ENCODE measurements at regions of chr4 and their contacts with region 1.

Region 1: GRCh38 chr4:8468746-8469535 is 28.4 kb downstream of the TRMT44 start:
- DNase-seq: peak; percentile 28 to 53
- ATAC-seq: peak; percentile 83 to 90
- H3K4me3 ChIP-seq: no peak overlapping the region
- H3K27ac ChIP-seq: no peak overlapping the region
- H3K4me1 ChIP-seq: no peaks in the 10 kb centered on the region
- CTCF ChIP-seq: peak; percentile 75
- EP300 ChIP-seq: no peak
- POLR2A ChIP-seq: no peak
- RAD21 ChIP-seq: peak; percentile 78 to 81

Region 2: DNA sequence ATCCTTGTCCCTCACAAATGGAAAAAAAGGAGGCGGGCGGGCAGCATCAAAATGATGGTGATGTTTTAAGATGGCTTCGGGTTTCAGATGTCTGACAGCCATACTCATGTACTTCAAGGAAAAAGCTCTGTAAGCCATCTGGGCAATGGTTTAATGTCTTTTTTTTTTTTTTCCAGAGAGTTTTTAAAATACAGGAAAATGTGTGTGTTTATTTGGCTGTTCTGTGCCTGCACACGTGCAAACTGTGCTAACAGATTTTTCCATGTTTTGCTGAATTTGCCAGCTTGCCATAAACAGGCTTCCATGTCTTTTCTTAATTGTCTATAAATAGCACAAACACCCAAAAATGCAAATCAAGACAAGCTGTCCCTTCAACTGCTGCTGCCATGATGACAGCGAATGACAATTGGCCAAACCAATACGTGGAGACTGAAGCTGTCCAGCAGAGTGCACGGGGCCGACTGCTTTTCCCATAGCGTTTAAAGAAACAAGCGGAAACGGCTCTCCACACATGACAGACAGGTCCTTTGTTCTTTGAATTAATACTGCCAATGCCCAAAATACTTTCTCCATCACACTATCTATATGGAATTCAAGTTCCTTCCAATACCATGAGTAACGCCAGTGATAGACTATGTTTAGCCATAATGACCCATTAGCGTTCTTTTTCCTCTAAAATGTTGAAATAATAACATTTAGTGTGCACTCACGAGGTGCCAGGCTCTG is 565.0 kb before region 1 on chr4:
- CTCF ChIA-PET with region 1: no interaction called
- POLR2A ChIA-PET with region 1: no interaction called
- DNase-seq: no peak
- ATAC-seq: no peak
- H3K4me3 ChIP-seq: no peak overlapping the region
- H3K27ac ChIP-seq: peak overlapping the region in 1 of 2 experiments; percentile 82; a peak in 3 of 6 replicates
- H3K4me1 ChIP-seq: peaks cover 80% of the 10 kb centered on the region
- CTCF ChIP-seq: no peak
- EP300 ChIP-seq: no peak
- POLR2A ChIP-seq: no peak
- RAD21 ChIP-seq: no peak

Region 3: DNA sequence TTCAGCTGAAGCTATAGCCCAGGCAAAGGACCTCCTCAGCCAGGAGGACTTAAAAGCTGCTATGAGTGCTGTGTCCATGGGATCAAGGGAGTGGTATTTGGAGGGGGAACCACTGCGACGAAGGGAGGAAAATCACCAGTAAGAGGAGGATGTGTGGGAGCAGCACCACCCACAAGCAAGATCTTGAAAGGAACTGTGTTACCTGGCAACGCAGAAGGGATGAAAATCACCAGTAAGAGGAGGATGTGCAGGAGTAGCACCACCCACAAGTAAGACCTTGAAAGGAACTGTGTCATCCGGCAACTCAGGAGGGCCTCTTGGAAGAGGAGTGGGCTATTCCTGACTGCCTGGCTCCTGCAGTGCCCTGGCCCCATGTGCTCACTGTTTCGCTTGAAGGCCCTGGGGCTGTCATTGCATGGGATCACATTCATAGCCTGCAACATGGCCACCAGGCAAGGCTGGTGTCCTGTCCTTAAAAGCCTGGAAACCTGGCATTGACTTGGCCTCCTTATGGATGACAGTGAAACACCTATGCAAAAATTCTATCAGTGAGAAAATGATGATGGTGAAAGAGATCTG is 19.9 kb after region 1 on chr4:
- CTCF ChIA-PET with region 1: interaction called, 11 read pairs
- POLR2A ChIA-PET with region 1: no interaction called
- DNase-seq: no peak
- ATAC-seq: no peak
- H3K4me3 ChIP-seq: no peak overlapping the region
- H3K27ac ChIP-seq: no peak overlapping the region
- H3K4me1 ChIP-seq: no peaks in the 10 kb centered on the region
- CTCF ChIP-seq: no peak
- EP300 ChIP-seq: no peak
- POLR2A ChIP-seq: no peak
- RAD21 ChIP-seq: no peak

Region 4: DNA sequence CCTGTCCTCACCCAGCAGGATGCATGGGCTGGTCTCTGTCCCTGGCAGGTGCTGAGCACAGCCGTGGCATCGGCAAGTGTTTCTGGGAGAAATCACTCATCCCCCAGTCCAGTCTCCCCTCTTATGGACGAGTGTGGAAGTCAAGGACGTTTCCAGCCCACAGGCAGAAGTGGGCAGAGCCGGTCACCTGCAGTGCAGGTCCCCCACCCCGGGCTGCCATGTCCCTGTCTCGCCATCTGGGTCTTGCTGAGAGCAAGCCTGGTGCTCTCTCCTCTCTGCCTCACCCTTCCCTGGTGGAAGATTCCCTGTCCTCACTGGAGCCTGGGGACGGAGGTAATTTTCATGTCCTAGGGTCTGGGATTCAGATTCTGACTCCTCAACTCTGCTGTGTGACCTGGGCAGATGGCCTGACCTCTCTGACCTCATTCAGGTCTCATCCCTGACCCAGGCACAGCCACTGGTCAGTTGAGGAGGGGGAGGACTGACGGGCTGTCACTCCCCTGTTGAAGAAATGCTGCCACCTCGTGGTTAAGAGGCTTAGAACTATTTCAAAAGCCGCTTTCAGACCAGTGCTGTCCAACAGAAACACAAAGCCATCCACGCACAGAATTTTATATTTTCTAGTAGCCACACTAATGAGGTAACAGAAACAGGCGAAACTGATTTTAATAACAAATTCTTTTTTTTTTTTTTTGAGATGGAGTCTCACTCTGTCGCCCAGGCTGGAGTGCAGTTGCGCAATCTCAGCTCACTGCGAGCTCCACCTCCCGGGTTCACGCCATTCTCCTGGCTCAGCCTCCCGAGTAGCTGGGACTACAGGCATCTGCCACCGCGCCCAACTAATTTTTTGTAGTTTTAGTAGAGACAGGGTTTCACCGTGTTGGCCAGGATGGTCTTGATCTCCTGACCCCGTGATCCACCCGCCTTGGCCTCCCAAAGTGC is 125.4 kb after region 1 on chr4:
- CTCF ChIA-PET with region 1: interaction called, 34 read pairs
- POLR2A ChIA-PET with region 1: no interaction called
- DNase-seq: peak; percentile 70 to 77
- ATAC-seq: peak; percentile 51 to 83; a peak in 5 of 6 replicates
- H3K4me3 ChIP-seq: no peak overlapping the region
- H3K27ac ChIP-seq: no peak overlapping the region
- H3K4me1 ChIP-seq: no peaks in the 10 kb centered on the region
- CTCF ChIP-seq: peak; percentile 70
- EP300 ChIP-seq: no peak
- POLR2A ChIP-seq: no peak
- RAD21 ChIP-seq: peak; percentile 72 to 75

Region 5: GRCh38 chr4:8607603-8608481 is 138.9 kb after region 1 on chr4:
- CTCF ChIA-PET with region 1: interaction called, 10 read pairs
- POLR2A ChIA-PET with region 1: no interaction called
- DNase-seq: peak in 1 of 2 experiments; percentile 50
- ATAC-seq: peak; percentile 50 to 82; a peak in 3 of 6 replicates
- H3K4me3 ChIP-seq: no peak overlapping the region
- H3K27ac ChIP-seq: no peak overlapping the region
- H3K4me1 ChIP-seq: no peaks in the 10 kb centered on the region
- CTCF ChIP-seq: peak; percentile 66
- EP300 ChIP-seq: no peak
- POLR2A ChIP-seq: no peak
- RAD21 ChIP-seq: peak; percentile 54 to 72

Region 6: GRCh38 chr4:8882239-8882638 is 413.3 kb after region 1 on chr4:
- CTCF ChIA-PET with region 1: no interaction called
- POLR2A ChIA-PET with region 1: no interaction called
- DNase-seq: no peak
- ATAC-seq: no peak
- H3K4me3 ChIP-seq: no peak overlapping the region
- H3K27ac ChIP-seq: no peak overlapping the region
- H3K4me1 ChIP-seq: no peaks in the 10 kb centered on the region
- CTCF ChIP-seq: no peak
- EP300 ChIP-seq: no peak
- POLR2A ChIP-seq: no peak
- RAD21 ChIP-seq: no peak

Measured in A549 (cell line).